Mammary epithelial cell (primary cell): ENCODE measurements at regions of chr1 and their contacts with region 1.

Region 1: DNA sequence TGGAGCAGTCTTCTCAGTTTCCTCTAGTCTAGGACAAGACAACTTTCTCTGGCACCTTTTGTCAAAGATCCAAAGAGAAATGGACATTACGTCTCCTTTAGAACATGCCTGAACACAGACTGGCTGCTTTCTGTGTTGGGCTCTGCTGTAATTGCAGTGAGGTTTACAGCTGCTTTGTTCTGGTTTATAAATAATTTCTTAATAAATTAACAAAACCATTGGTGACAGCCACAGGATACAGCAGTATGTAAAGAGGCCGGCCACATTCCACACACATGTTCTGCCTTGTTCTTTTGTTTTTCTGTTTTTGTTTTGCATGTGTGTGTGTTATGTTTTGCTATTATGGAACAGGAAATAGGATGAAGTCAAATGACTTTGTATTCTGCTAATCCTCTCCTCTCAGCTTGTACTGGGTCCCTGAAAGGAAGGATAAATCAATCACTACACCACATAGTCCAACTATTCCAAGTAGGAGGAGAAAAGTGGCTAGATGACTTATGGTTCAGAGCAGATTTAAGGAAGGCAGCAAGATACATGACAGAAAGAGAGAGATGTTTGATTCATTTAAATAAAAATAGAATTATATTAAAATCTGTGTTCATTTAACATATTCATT is 161.5 kb upstream of the ESRRG start:
- DNase-seq: peak; percentile 20
- H3K4me3 ChIP-seq: peak overlapping the region in 1 of 3 experiments; percentile 10
- H3K27ac ChIP-seq: peak overlapping the region; percentile 53
- H3K4me1 ChIP-seq: peaks cover 14% of the 10 kb centered on the region
- H3K27me3 ChIP-seq: no peaks in the 10 kb centered on the region
- CTCF ChIP-seq: no peak

Region 2: DNA sequence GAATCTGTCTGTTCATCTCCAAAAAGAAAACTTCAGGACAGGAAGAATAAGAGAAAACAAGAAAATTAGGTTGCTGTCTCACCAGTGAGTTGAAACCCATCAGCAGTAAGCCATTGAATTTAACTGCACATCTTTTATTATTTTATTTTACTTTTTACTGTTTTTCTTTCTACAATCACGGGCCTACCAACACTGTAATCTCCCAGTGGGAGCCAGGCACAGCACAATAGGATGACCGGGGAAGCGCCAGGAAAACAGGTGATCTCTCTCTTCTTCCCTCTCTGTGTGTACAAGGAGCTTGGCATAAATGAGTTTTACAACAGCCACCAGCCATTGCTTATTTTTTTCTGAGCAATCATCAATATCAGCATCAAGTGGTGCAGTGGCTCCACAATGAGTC is 48.4 kb before region 1 on chr1:
- CTCF ChIA-PET with region 1: no interaction called
- dilution Hi-C with region 1: loop called (anchors 5 kb)
- in situ Hi-C with region 1: no loop called
- intact Hi-C with region 1: no loop called
- DNase-seq: no peak
- H3K4me3 ChIP-seq: no peak overlapping the region
- H3K27ac ChIP-seq: no peak overlapping the region
- H3K4me1 ChIP-seq: no peaks in the 10 kb centered on the region
- H3K27me3 ChIP-seq: no peaks in the 10 kb centered on the region
- CTCF ChIP-seq: no peak

Region 3: DNA sequence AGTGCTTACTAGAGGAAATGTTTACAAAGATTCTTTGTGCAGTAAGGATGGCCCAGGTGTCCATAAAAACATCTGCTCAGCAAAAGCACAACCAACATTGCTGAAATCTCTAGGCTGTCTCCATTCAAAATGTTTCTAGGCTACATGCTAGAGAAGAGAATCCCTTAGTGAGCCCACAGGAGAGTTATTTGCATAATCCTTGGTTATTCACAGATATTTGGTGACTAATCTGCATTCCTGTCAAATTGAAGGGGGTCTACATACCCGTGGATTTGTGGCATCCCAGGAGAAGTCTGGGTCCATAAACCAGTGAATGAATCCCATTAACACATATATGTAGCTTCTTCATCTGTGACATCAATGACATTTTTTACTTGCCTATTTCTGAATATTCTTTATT is 99.8 kb after region 1 on chr1:
- CTCF ChIA-PET with region 1: no interaction called
- dilution Hi-C with region 1: no loop called
- in situ Hi-C with region 1: no loop called
- intact Hi-C with region 1: no loop called
- DNase-seq: no peak
- H3K4me3 ChIP-seq: no peak overlapping the region
- H3K27ac ChIP-seq: no peak overlapping the region
- H3K4me1 ChIP-seq: no peaks in the 10 kb centered on the region
- H3K27me3 ChIP-seq: no peaks in the 10 kb centered on the region
- CTCF ChIP-seq: no peak